CD4-positive, alpha-beta T cell (primary cell): ENCODE measurements at regions of chr3 and their contacts with region 1.

Region 1: DNA sequence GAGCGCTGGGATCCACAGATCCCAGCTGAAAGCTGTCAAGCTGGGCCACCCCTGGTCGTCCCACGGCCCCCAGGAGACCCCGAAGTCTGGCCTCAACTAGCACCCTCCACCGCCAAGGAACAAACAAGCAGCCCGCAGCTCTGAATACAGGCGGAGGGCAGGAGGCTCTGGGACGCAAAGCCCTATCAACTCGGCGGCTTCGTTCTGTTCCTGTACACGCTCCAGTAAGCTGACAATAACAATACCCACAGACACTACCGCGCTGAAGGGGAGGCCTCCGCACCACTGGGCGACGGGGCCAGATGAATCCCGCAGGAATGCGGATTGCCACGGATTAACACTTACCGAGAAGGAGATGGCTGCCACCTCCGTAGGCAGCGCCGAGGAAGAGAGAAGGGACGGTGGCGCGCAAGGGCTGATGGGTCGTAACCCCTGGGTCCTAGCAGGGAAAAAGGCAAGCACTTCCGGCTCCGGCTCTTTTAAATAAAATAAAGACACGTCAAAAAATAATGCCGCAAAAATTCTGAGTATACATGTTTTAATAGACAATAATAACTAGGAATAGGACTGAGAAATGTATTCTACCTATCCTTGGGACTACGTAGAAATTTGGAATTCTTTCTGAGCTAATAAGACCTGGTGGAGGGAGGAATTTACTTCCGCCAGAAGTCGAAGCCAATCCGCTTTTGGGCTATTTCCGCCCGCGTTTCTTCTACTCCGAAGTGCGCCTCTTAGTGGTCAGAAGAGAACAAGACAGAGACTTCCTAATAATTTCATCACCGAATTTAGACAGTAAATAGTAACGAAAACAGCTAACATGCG is at the start of gene RPL32:
- DNase-seq: peak; percentile 76 to 96 (median 82)
- ATAC-seq: peak; percentile 91
- H3K4me3 ChIP-seq: peak within 1 kb of the TSS; percentile 86
- H3K4me3 Mint-ChIP-seq: peak within 1 kb of the TSS; percentile 93
- H3K27ac ChIP-seq: peak within 1 kb of the TSS; percentile 90 to 94
- H3K27ac Mint-ChIP-seq: peak within 1 kb of the TSS; percentile 99
- H3K4me1 ChIP-seq: peaks cover 39% of the 10 kb centered on the region
- H3K4me1 Mint-ChIP-seq: peaks cover 55% of the 10 kb centered on the region
- H3K27me3 ChIP-seq: no peaks in the 10 kb centered on the region
- H3K27me3 Mint-ChIP-seq: no peaks in the 10 kb centered on the region
- CTCF ChIP-seq: peak; percentile 74
- total RNA-seq, gene RPL32: 4,308 to 4,667 TPM

Region 2: DNA sequence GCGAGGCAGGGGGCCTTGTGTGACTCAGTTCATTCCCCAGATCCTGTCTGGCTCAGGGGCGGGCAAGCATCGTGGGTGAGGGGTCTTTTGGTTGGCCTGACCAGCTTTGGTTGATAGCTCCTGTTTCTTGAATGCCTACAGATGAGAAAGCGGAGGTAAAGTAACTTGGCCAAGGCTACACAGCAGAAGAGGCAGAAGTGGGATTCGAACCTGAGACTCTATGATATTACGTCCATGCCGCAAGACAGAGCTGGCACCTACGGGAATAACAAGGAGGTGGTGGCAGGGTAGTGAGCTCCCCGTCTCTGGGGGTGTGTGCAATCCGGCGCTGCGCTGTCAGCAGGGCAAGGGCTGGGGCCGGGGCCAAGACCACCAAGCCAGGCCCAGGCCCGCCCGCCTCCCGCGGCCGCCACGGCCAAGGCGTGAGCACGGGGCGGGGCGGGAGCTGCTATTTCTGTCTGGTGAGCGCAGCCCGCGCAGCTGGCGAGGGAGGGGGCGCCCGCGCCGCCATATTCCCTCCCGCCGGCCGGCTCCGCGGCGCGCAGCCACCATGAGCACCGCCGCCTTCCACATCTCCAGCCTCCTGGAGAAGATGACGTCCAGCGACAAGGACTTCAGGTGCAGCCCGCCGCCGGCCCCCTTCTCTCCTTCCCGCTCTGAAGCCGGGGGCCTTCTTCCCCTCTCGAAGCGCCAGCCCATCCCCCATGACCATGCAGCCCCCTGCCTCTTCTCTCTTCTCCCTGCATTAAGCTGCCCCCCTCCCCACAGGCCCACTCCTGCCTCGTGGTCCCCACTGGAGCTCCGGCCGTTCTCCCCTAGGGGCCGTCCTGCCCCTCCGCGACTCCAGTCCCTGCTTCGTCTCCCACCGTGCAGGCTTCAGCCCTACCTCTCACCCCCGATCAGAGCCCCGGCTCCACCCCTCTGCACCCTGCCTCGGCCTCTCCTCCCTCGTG is 44.9 kb before region 1 on chr3 and contains the start of gene CAND2:
- CTCF ChIA-PET with region 1: interaction called, 3 read pairs
- POLR2A ChIA-PET with region 1: interaction called, 18 read pairs
- intact Hi-C with region 1: no loop called
- DNase-seq: peak in 12 of 14 experiments; percentile 7 to 69 (median 32)
- ATAC-seq: peak; percentile 92
- H3K4me3 ChIP-seq: peak within 1 kb of the TSS; percentile 68
- H3K4me3 Mint-ChIP-seq: peak within 1 kb of the TSS; percentile 93
- H3K27ac ChIP-seq: no peak within 1 kb of the TSS
- H3K27ac Mint-ChIP-seq: peak within 1 kb of the TSS; percentile 23
- H3K4me1 ChIP-seq: peaks cover 13% of the 10 kb centered on the region
- H3K4me1 Mint-ChIP-seq: peaks cover 29% of the 10 kb centered on the region
- H3K27me3 ChIP-seq: no peaks in the 10 kb centered on the region
- H3K27me3 Mint-ChIP-seq: no peaks in the 10 kb centered on the region
- CTCF ChIP-seq: no peak
- total RNA-seq, gene CAND2: 3.5 to 6.0 TPM

Region 3: DNA sequence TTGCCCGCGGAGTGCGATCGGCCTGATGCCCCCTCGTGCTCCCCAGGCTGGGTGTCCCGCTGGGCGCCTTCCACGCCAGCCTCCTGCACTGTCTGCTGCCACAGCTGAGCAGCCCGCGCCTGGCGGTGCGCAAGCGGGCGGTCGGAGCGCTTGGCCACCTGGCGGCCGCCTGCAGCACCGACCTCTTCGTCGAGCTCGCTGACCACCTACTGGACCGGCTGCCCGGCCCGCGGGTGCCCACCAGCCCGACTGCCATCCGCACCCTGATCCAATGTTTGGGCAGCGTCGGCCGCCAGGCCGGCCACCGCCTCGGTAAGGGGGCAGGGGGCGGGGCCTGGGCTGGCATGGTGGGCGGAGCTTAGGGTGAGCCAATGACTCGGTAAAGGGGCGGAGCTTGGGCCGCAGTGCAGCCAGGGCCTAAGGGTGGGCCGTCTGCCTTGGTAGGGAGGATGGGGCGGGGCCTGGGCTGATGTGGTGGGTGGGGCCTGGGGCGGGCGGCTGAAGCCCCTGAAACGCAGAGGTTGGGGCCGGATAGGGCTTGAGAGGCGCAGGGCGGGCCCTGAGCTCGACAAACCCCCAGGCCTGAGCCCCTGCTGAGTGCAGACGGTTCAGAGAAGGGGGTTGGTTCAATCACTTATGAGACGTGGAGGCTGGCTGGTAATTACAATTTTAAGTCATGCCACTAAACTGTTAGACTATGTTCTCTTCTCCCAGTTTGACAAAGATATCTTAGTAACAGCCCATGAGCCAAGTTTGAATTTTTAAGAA is 31.2 kb before region 1 on chr3:
- CTCF ChIA-PET with region 1: interaction called, 29 read pairs
- POLR2A ChIA-PET with region 1: interaction called, 62 read pairs
- intact Hi-C with region 1: loop called (anchors 1 to 2 kb)
- DNase-seq: peak; percentile 89 to 97 (median 93)
- ATAC-seq: peak; percentile 99
- H3K4me3 ChIP-seq: peak overlapping the region; percentile 42
- H3K4me3 Mint-ChIP-seq: peak overlapping the region; percentile 83
- H3K27ac ChIP-seq: no peak overlapping the region
- H3K27ac Mint-ChIP-seq: no peak overlapping the region
- H3K4me1 ChIP-seq: peaks cover 16% of the 10 kb centered on the region
- H3K4me1 Mint-ChIP-seq: peaks cover 19% of the 10 kb centered on the region
- H3K27me3 ChIP-seq: no peaks in the 10 kb centered on the region
- H3K27me3 Mint-ChIP-seq: no peaks in the 10 kb centered on the region
- CTCF ChIP-seq: peak; percentile 92

Region 4: DNA sequence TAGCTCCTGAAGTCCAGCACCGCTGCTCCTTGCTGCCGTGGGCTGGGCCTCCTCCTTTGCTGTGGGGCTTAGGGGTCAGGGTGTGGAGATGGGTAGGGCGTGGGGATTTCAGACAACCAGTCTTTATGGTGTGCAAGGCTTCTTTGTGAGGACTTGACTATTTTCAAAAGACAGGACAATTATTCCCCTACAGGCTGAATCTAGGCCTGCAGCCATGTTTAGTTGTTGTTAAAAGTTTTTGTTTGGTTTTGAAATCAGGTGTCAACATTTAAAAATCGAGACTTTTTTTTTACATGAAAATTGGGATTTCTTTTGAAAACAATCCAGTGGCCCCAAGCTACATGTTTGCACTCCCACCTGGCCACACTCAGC is 10.6 kb before region 1 on chr3:
- CTCF ChIA-PET with region 1: interaction called, 18 read pairs
- POLR2A ChIA-PET with region 1: interaction called, 34 read pairs
- intact Hi-C with region 1: no loop called
- DNase-seq: no peak
- ATAC-seq: no peak
- H3K4me3 ChIP-seq: no peak overlapping the region
- H3K4me3 Mint-ChIP-seq: no peak overlapping the region
- H3K27ac ChIP-seq: no peak overlapping the region
- H3K27ac Mint-ChIP-seq: no peak overlapping the region
- H3K4me1 ChIP-seq: no peaks in the 10 kb centered on the region
- H3K4me1 Mint-ChIP-seq: no peaks in the 10 kb centered on the region
- H3K27me3 ChIP-seq: no peaks in the 10 kb centered on the region
- H3K27me3 Mint-ChIP-seq: no peaks in the 10 kb centered on the region
- CTCF ChIP-seq: no peak

Region 5: GRCh38 chr3:12967606-12968351 is 126.4 kb after region 1 on chr3:
- CTCF ChIA-PET with region 1: no interaction called
- POLR2A ChIA-PET with region 1: interaction called, 4 read pairs
- intact Hi-C with region 1: loop called in 1 of 2 experiments (anchors 5 kb)
- DNase-seq: peak; percentile 82 to 97 (median 88)
- ATAC-seq: peak; percentile 95
- H3K4me3 ChIP-seq: peak overlapping the region; percentile 47
- H3K4me3 Mint-ChIP-seq: peak overlapping the region; percentile 80
- H3K27ac ChIP-seq: no peak overlapping the region
- H3K27ac Mint-ChIP-seq: peak overlapping the region; percentile 67
- H3K4me1 ChIP-seq: peaks cover 65% of the 10 kb centered on the region
- H3K4me1 Mint-ChIP-seq: peaks cover 78% of the 10 kb centered on the region
- H3K27me3 ChIP-seq: no peaks in the 10 kb centered on the region
- H3K27me3 Mint-ChIP-seq: no peaks in the 10 kb centered on the region
- CTCF ChIP-seq: no peak

Region 6: DNA sequence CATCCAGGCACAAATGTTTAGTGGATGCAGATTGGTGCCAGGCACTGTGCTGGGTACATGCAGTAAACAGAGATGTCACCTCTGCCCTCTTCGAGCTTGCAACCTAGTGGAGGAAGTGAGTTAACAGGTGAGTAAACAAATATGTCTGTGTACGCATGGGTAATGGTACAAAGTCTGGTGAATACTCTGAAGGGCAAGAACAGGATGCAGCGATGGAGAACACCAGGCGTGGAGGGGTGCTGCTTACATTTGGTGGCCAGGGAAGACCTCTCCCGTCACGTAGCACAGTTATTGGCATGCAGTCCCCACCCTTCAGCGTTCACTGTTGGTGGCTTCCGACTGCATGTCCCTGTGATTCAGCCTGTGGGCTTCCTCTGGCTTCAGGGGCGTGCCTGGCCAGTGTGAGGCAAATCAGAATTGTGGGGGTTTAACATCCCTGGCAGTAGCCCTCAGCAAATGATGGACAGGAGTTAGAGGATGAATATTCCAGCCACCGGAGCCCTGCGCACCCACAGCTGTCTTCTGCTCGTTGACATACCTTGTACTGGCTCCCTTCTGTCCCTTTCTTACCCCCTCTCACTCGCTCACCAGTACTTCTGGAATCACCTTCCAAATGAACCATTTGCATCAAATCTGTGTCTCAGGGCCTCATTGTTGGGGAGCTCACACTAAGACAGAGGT is 629.7 kb after region 1 on chr3:
- CTCF ChIA-PET with region 1: no interaction called
- POLR2A ChIA-PET with region 1: no interaction called
- intact Hi-C with region 1: no loop called
- DNase-seq: no peak
- ATAC-seq: no peak
- H3K4me3 ChIP-seq: no peak overlapping the region
- H3K4me3 Mint-ChIP-seq: no peak overlapping the region
- H3K27ac ChIP-seq: no peak overlapping the region
- H3K27ac Mint-ChIP-seq: no peak overlapping the region
- H3K4me1 ChIP-seq: no peaks in the 10 kb centered on the region
- H3K4me1 Mint-ChIP-seq: no peaks in the 10 kb centered on the region
- H3K27me3 ChIP-seq: no peaks in the 10 kb centered on the region
- H3K27me3 Mint-ChIP-seq: no peaks in the 10 kb centered on the region
- CTCF ChIP-seq: no peak

Region 7: DNA sequence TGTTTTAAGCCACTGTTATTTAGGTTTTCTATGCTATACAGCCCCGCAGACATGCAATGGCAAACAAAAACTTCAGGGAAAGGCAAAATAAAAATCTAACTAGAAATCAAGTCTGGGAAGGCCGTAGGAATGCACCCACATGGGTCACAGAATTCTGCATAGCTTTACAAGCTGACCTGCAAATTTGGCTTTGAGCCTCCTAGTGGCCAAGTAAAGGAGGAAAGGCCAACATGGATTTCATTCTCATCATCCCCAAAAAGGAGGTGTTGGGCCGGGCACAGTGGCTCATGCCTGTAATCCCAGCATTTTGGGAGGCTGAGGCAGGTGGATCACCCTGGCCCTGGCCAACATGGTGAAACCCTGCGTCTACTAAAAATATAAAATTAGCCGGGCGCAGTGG is 831.8 kb after region 1 on chr3:
- CTCF ChIA-PET with region 1: no interaction called
- POLR2A ChIA-PET with region 1: no interaction called
- intact Hi-C with region 1: no loop called
- DNase-seq: no peak
- ATAC-seq: no peak
- H3K4me3 ChIP-seq: no peak overlapping the region
- H3K4me3 Mint-ChIP-seq: no peak overlapping the region
- H3K27ac ChIP-seq: no peak overlapping the region
- H3K27ac Mint-ChIP-seq: no peak overlapping the region
- H3K4me1 ChIP-seq: no peaks in the 10 kb centered on the region
- H3K4me1 Mint-ChIP-seq: no peaks in the 10 kb centered on the region
- H3K27me3 ChIP-seq: peaks cover 8 to 10% of the 10 kb centered on the region in 2 experiments
- H3K27me3 Mint-ChIP-seq: peaks cover 32% of the 10 kb centered on the region
- CTCF ChIP-seq: peak; percentile 22